IMR-90 (cell line): ENCODE measurements at regions of chr12 and their contacts with region 1.

Region 1: DNA sequence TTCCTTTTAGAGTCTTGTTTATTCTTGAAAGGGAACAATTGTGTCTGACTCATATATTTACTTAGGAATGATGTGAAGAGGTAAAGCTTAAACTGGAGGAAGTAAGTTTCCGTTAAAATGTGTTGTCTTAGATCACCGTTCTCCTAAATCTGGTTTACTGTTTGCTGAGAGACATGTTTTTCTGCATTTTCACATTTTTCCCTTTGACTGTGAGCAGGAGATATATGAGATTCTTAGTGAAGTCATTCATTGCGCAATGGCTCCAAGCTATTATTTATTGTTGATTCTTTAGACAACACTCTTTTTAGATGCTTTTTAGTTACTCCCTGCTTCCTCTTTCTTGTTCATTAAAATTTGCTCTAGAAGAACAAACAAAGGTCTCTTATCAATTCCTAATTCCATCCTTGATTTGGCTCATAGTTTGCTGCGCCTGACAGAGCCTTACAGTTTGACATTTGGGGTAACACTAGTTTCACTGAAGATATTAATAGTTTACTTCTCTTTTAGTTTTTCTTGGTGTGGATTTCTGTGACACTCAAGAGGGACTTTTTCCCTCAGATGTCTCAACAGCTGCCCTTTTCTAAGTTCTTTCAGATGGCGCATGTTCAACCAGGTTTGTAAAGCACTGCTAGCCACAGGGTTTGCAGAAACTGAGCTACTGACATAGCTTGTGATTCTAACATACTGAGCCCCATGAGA is 11.4 kb downstream of the CLECL1 start:
- DNase-seq: peak; percentile 3
- ATAC-seq: peak; percentile 27; the same call in 1 of the 2 replicates
- H3K4me3 ChIP-seq: no peak overlapping the region
- H3K27ac ChIP-seq: no peak overlapping the region
- H3K4me1 ChIP-seq: peaks cover 2% of the 10 kb centered on the region; the same call in 1 of the 2 replicates
- H3K27me3 ChIP-seq: no peaks in the 10 kb centered on the region; the same call in 1 of the 2 replicates
- CTCF ChIP-seq: no peak
- POLR2A ChIP-seq: no peak
- RAD21 ChIP-seq: no peak

Region 2: GRCh38 chr12:9741726-9742125 is 20.2 kb after region 1 on chr12:
- CTCF ChIA-PET with region 1: interaction called, 14 read pairs
- POLR2A ChIA-PET with region 1: no interaction called
- dilution Hi-C with region 1: no loop called
- in situ Hi-C with region 1: no loop called
- intact Hi-C with region 1: no loop called
- DNase-seq: no peak
- ATAC-seq: no peak
- H3K4me3 ChIP-seq: no peak overlapping the region
- H3K27ac ChIP-seq: no peak overlapping the region
- H3K4me1 ChIP-seq: no peaks in the 10 kb centered on the region
- H3K27me3 ChIP-seq: peaks cover 10% of the 10 kb centered on the region
- CTCF ChIP-seq: no peak
- POLR2A ChIP-seq: no peak
- RAD21 ChIP-seq: no peak